ENCODE measurements at regions of chr7 and their contacts with region 1.

Region 1: DNA sequence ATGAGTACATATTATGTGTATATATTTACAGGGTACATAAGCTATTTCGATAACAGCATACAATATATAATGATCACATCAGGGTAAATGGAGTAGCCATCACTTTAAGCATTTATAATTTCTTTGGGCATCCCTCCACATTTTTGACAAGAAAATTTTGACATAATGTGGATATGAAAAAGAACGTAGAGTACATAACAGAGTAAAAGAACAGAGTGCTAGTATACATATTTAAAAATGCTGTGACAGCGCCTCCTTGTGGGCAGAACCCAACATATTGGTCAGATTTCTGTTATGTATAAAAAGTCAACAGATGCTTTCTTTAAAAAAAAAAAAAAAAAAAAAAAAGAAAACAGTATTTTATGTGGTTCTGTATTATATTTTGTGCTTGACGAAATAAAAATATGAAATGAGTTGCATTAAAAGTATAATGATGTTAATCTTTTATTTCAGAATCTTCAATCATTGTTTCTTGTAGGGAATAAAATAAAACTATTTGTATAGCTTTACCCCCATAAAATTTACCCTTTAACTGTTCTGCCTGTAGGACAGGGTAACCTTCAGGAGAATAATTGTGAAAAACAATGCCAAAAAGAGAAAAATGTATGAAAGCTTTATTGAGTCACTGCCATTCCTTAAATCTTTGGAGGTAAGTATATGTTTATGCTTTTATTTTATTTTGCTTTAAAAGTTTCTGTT is 18.3 kb upstream of the HBP1 start:
- DNase-seq: peak; percentile 84
- H3K4me3 ChIP-seq: no peak overlapping the region
- H3K27ac ChIP-seq: no peak overlapping the region
- H3K4me1 ChIP-seq: peaks cover 41% of the 10 kb centered on the region
- CTCF ChIP-seq: peak; percentile 95

Region 2: GRCh38 chr7:106793015-106793975 is 357.2 kb before region 1 on chr7:
- CTCF ChIA-PET with region 1: interaction called, 3 read pairs
- POLR2A ChIA-PET with region 1: no interaction called
- intact Hi-C with region 1: loop called (anchors 1 kb)
- DNase-seq: peak; percentile 70
- H3K4me3 ChIP-seq: no peak overlapping the region
- H3K27ac ChIP-seq: no peak overlapping the region
- H3K4me1 ChIP-seq: no peaks in the 10 kb centered on the region
- CTCF ChIP-seq: peak; percentile 96

Region 3: DNA sequence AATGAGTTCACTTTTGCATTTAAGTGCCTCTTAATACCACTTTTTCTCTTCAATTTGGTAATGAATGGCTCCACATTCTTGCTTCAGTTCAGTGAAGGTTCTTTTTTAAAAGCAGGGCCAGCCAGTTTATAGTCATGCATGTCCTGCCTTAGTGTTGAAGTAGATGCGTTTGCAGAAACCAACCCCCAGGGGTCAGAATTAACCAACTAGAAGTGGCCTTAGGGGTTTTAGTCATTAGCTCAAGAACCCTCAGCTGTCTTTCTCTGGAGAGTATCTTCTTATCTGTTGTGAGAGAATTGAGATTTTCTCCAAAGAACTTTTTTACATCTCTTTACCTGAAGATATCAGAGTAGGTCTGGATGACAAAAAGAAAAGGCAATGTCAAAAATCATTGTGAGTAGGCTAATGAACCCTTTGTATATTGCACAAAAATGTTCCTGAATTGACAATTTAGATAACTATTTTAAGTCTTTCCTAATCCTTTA is 203.2 kb before region 1 on chr7:
- CTCF ChIA-PET with region 1: interaction called, 7 read pairs
- POLR2A ChIA-PET with region 1: interaction called, 9 read pairs
- intact Hi-C with region 1: loop called (anchors 1 kb)
- DNase-seq: peak; percentile 92
- H3K4me3 ChIP-seq: no peak overlapping the region
- H3K27ac ChIP-seq: no peak overlapping the region
- H3K4me1 ChIP-seq: peaks cover 18% of the 10 kb centered on the region
- CTCF ChIP-seq: peak; percentile 99

Region 4: GRCh38 chr7:107130487-107131225 is 19.9 kb before region 1 on chr7:
- CTCF ChIA-PET with region 1: interaction called, 3 read pairs
- POLR2A ChIA-PET with region 1: interaction called, 12 read pairs
- intact Hi-C with region 1: no loop called
- DNase-seq: no peak
- H3K4me3 ChIP-seq: no peak overlapping the region
- H3K27ac ChIP-seq: no peak overlapping the region
- H3K4me1 ChIP-seq: peaks cover 30% of the 10 kb centered on the region
- CTCF ChIP-seq: 0 out of 2 replicates have a peak, but pooled peaks have one; percentile 23